T-cell (primary cell): ENCODE measurements at regions of chr10 and their contacts with region 1.

Region 1: GRCh38 chr10:28012990-28013515 is 14.2 kb upstream of the ODAD2 start:
- DNase-seq: no peak
- ATAC-seq: no peak
- H3K4me3 ChIP-seq: no peak overlapping the region
- H3K4me3 Mint-ChIP-seq: no peak overlapping the region
- H3K27ac ChIP-seq: no peak overlapping the region
- H3K27ac Mint-ChIP-seq: no peak overlapping the region
- H3K4me1 ChIP-seq: no peaks in the 10 kb centered on the region
- H3K4me1 Mint-ChIP-seq: peaks cover 0 to 3% (median 0%) of the 10 kb centered on the region in 3 donors
- H3K27me3 ChIP-seq: peaks cover 0 to 3% of the 10 kb centered on the region in 2 experiments
- H3K27me3 Mint-ChIP-seq: peaks cover 12 to 16% of the 10 kb centered on the region in 2 donors

Region 2: GRCh38 chr10:28054228-28054837 is 41.3 kb after region 1 on chr10:
- CTCF ChIA-PET with region 1: no interaction called
- POLR2A ChIA-PET with region 1: interaction called in 1 of 2 experiments, 10 read pairs
- DNase-seq: no peak
- ATAC-seq: no peak
- H3K4me3 ChIP-seq: no peak overlapping the region
- H3K4me3 Mint-ChIP-seq: no peak overlapping the region
- H3K27ac ChIP-seq: no peak overlapping the region
- H3K27ac Mint-ChIP-seq: no peak overlapping the region
- H3K4me1 ChIP-seq: no peaks in the 10 kb centered on the region
- H3K4me1 Mint-ChIP-seq: no peaks in the 10 kb centered on the region
- H3K27me3 ChIP-seq: no peaks in the 10 kb centered on the region
- H3K27me3 Mint-ChIP-seq: no peaks in the 10 kb centered on the region

Region 3: GRCh38 chr10:28149746-28150145 is 136.7 kb after region 1 on chr10:
- CTCF ChIA-PET with region 1: interaction called in 1 of 2 experiments, 16 read pairs
- POLR2A ChIA-PET with region 1: no interaction called
- DNase-seq: no peak
- ATAC-seq: no peak
- H3K4me3 ChIP-seq: no peak overlapping the region
- H3K4me3 Mint-ChIP-seq: no peak overlapping the region
- H3K27ac ChIP-seq: no peak overlapping the region
- H3K27ac Mint-ChIP-seq: no peak overlapping the region
- H3K4me1 ChIP-seq: no peaks in the 10 kb centered on the region
- H3K4me1 Mint-ChIP-seq: peaks cover 1 to 14% (median 11%) of the 10 kb centered on the region in 3 donors
- H3K27me3 ChIP-seq: no peaks in the 10 kb centered on the region
- H3K27me3 Mint-ChIP-seq: no peaks in the 10 kb centered on the region

Region 4: DNA sequence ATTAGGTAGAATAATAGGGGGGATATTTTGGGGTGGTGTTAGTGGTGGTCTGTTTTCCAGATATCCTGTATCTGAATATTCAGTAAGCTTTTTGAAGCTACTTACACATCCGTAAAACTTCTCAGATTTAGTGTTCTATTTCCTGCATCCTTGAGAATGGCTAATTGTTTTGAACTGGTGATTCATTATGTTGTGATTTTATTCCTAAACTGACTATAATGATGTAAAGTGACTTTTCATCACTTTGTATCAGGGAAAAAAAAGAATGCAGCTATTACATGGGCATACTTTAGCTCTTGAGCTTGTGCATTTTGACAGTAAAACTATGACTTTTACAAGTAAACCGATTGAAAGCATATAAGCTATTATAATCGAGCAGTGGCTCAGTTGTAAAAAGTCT is 538.0 kb after region 1 on chr10:
- CTCF ChIA-PET with region 1: no interaction called
- POLR2A ChIA-PET with region 1: no interaction called
- DNase-seq: no peak
- ATAC-seq: no peak
- H3K4me3 ChIP-seq: no peak overlapping the region
- H3K4me3 Mint-ChIP-seq: peak overlapping the region; percentile 22 to 39 (median 35)
- H3K27ac ChIP-seq: no peak overlapping the region
- H3K27ac Mint-ChIP-seq: peak overlapping the region; percentile 48 to 61
- H3K4me1 ChIP-seq: peaks cover 15 to 25% of the 10 kb centered on the region in 2 experiments
- H3K4me1 Mint-ChIP-seq: peaks cover 85 to 90% (median 87%) of the 10 kb centered on the region in 3 donors
- H3K27me3 ChIP-seq: no peaks in the 10 kb centered on the region
- H3K27me3 Mint-ChIP-seq: no peaks in the 10 kb centered on the region